Naive thymus-derived CD8-positive, alpha-beta T cell (primary cell): ENCODE measurements at regions of chr4 and their contacts with region 1.

Region 1: DNA sequence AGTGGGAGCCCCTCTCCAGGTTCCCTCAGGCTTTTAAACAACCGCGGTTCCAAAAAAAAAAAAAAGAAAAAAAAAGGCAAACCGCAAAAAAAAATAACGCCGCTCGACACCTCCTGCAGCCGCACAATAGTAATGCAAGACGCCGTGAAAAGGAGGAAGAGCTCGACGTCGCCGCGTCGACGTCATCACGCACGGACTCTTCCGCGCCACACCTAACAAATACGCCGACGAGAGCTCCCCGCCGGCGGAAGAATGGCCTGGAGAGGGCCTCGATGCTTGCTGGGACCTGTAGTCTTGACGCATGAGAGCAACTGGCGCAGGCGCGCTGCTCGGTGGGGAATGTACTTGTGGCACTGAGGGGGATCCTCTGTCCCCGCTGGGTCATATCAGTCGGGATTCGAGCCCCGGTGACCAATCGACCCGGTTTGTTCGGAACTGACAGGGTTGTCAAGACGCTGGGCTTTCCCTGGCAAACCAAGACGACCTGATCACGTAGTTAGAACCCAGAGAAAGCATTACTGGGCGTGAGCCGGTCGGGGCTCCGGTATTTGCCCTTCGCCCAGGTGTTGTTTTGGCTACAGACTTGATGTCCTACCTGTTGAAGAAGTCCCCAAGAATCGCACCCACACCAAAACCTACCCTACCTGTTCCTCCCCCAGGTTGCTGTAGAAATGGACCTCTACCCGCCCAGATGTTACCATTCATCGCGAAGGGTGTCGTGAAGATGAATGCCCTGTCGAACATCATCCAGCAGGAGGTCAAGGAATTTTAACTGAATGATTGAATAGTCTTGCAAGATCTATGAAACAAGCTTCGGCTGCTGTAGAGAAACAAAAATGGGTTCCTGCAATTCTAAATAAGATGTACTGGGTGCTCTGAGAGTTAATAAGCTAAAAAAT is at the start of gene CBR4:
- DNase-seq: peak; percentile 87 to 99 (median 95)
- ATAC-seq: peak; percentile 94 to 97
- H3K4me3 Mint-ChIP-seq: peak within 1 kb of the TSS; percentile 89 to 98 (median 96)
- H3K27ac Mint-ChIP-seq: peak within 1 kb of the TSS; percentile 93 to 99 (median 96)
- H3K4me1 Mint-ChIP-seq: peaks cover 16 to 46% (median 33%) of the 10 kb centered on the region in 4 donors
- H3K27me3 Mint-ChIP-seq: peaks cover 0 to 4% (median 2%) of the 10 kb centered on the region in 5 donors
- polyA plus RNA-seq, gene CBR4: 4.5 to 5.5 (median 4.9) TPM

Region 2: GRCh38 chr4:169612871-169613859 is 602.8 kb after region 1 on chr4:
- POLR2A ChIA-PET with region 1: interaction called, 15 read pairs
- DNase-seq: peak; percentile 48 to 80 (median 70)
- ATAC-seq: peak; percentile 36 to 41
- H3K4me3 Mint-ChIP-seq: peak overlapping the region; percentile 95 to 99 (median 98)
- H3K27ac Mint-ChIP-seq: peak overlapping the region; percentile 98 to 100 (median 100)
- H3K4me1 Mint-ChIP-seq: peaks cover 9 to 51% (median 42%) of the 10 kb centered on the region in 4 donors
- H3K27me3 Mint-ChIP-seq: no peaks in the 10 kb centered on the region